ENCODE measurements at regions of chr18 and their contacts with region 1.

Region 1: GRCh38 chr18:23503038-23503962 is at the start of gene RMC1:
- DNase-seq: peak; percentile 98
- H3K4me3 ChIP-seq: peak within 1 kb of the TSS; percentile 93 to 98 (median 96)
- H3K27ac ChIP-seq: peak within 1 kb of the TSS; percentile 88 to 97 (median 92)
- H3K4me1 ChIP-seq: peaks cover 19 to 64% (median 61%) of the 10 kb centered on the region in 4 donors
- H3K27me3 ChIP-seq: no peaks in the 10 kb centered on the region
- CTCF ChIP-seq: peak in 1 of 3 experiments; percentile 37
- EP300 ChIP-seq: no peak
- POLR2A ChIP-seq: peak; percentile 76
- total RNA-seq, gene RMC1: 24.9 to 41.0 (median 31.0) TPM

Region 2: GRCh38 chr18:23452728-23453679 is 50.3 kb before region 1 on chr18 and contains the start of gene RIOK3:
- intact Hi-C with region 1: loop called (anchors 10 kb)
- DNase-seq: peak; percentile 98
- H3K4me3 ChIP-seq: peak within 1 kb of the TSS; percentile 89 to 99 (median 92)
- H3K27ac ChIP-seq: peak within 1 kb of the TSS; percentile 92 to 98 (median 95)
- H3K4me1 ChIP-seq: peaks cover 29 to 54% (median 50%) of the 10 kb centered on the region in 4 donors
- H3K27me3 ChIP-seq: no peaks in the 10 kb centered on the region
- CTCF ChIP-seq: no peak
- EP300 ChIP-seq: no peak
- POLR2A ChIP-seq: peak; percentile 89
- total RNA-seq, gene RIOK3: 38.7 to 52.2 (median 46.3) TPM

Region 3: DNA sequence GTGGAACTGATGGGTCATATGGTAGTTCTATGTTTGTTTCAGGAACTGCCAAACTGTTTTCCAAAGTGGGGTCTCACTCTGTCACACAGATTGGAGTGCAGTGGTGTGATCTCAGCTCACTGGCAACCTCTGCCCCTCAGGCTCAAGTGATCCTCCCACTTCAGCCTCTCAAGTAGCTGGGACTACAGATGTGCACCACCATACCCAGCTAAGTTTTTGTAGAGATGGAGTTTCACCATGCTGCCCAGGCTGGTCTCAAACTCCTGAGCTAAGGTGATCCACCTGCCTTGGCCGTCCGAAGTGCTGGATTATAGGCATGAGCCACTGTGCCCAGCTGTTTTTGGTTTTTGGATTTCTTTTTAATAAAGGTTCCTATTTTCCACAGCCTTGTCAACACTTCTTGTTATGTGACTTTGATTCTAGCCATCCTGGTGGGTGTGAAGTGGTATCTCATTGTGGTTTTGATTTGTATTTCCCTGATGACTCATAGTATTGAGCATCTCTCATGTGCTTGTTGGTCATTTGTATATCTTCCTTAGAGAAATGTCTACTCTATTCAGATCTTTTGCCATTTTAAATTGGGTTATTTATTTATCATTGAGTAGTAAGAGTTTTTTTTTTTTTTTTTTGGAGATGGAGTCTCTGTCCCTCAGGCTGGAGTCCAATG is 60.2 kb after region 1 on chr18:
- intact Hi-C with region 1: no loop called
- DNase-seq: no peak
- H3K4me3 ChIP-seq: no peak overlapping the region
- H3K27ac ChIP-seq: no peak overlapping the region
- H3K4me1 ChIP-seq: no peaks in the 10 kb centered on the region
- H3K27me3 ChIP-seq: no peaks in the 10 kb centered on the region
- CTCF ChIP-seq: no peak
- EP300 ChIP-seq: no peak
- POLR2A ChIP-seq: no peak

Region 4: GRCh38 chr18:23703057-23703986 is 200.0 kb after region 1 on chr18:
- intact Hi-C with region 1: no loop called
- DNase-seq: no peak
- H3K4me3 ChIP-seq: no peak overlapping the region
- H3K27ac ChIP-seq: no peak overlapping the region
- H3K4me1 ChIP-seq: peaks cover 0 to 13% (median 5%) of the 10 kb centered on the region in 4 donors
- H3K27me3 ChIP-seq: no peaks in the 10 kb centered on the region
- CTCF ChIP-seq: peak; percentile 49 to 53 (median 50)
- EP300 ChIP-seq: no peak
- POLR2A ChIP-seq: no peak

Region 5: DNA sequence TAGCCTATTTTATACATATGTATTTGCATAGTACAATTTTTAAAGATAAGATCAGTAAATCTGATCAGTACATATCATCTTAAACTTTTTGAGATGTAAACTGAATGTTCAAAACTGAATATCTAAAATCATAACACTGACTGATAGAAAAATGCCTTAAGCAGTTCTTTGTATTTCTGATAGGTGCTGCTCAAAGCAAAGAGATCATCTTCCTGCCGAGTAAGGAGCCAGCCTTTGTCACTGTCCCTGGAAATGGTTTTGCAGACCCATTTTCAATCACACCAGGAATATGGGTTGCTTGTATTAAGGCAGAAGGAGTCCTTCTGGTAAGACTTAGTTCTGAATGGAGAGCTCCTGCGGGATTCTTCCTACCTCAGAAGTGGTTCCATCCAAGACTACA is 320.9 kb after region 1 on chr18:
- intact Hi-C with region 1: no loop called
- DNase-seq: peak; percentile 82
- H3K4me3 ChIP-seq: no peak overlapping the region
- H3K27ac ChIP-seq: no peak overlapping the region
- H3K4me1 ChIP-seq: peaks cover 19 to 34% (median 31%) of the 10 kb centered on the region in 4 donors
- H3K27me3 ChIP-seq: no peaks in the 10 kb centered on the region
- CTCF ChIP-seq: no peak
- EP300 ChIP-seq: no peak
- POLR2A ChIP-seq: no peak

Region 6: GRCh38 chr18:24170389-24170788 is 667.1 kb after region 1 on chr18:
- intact Hi-C with region 1: no loop called
- DNase-seq: no peak
- H3K4me3 ChIP-seq: no peak overlapping the region
- H3K27ac ChIP-seq: no peak overlapping the region
- H3K4me1 ChIP-seq: no peaks in the 10 kb centered on the region
- H3K27me3 ChIP-seq: no peaks in the 10 kb centered on the region
- CTCF ChIP-seq: no peak
- EP300 ChIP-seq: no peak
- POLR2A ChIP-seq: no peak

Measured in esophagus muscularis mucosa (tissue), 4 donors.